ENCODE measurements at regions of chr2 and their contacts with region 1.

Region 1: DNA sequence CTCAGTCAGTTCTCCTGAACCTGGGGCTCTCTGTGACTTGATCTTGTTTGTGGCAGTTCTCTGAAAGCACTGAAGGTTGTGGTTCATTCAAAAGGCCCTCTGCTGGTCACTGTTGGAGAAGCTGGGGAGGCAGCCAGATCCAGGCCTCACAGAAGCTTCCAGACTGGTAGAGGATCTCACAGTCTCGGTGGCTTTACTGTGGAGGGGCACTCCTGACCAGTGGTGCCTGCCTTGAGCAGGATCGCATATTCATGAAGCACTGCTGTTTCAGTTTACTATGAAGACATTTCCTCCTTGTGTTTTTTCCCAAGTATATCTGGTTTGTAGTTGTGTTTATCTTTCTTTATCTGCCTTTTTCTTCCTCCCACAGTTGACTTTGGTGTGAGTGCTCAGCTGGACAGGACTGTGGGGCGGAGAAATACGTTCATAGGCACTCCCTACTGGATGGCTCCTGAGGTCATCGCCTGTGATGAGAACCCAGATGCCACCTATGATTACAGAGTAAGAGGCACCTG is 133.9 kb downstream of the MAP4K4 start:
- DNase-seq: peak; percentile 76
- H3K4me3 Mint-ChIP-seq: no peak overlapping the region
- H3K27ac Mint-ChIP-seq: peak overlapping the region; percentile 71
- H3K4me1 Mint-ChIP-seq: peaks cover 52% of the 10 kb centered on the region
- H3K27me3 Mint-ChIP-seq: no peaks in the 10 kb centered on the region

Region 2: DNA sequence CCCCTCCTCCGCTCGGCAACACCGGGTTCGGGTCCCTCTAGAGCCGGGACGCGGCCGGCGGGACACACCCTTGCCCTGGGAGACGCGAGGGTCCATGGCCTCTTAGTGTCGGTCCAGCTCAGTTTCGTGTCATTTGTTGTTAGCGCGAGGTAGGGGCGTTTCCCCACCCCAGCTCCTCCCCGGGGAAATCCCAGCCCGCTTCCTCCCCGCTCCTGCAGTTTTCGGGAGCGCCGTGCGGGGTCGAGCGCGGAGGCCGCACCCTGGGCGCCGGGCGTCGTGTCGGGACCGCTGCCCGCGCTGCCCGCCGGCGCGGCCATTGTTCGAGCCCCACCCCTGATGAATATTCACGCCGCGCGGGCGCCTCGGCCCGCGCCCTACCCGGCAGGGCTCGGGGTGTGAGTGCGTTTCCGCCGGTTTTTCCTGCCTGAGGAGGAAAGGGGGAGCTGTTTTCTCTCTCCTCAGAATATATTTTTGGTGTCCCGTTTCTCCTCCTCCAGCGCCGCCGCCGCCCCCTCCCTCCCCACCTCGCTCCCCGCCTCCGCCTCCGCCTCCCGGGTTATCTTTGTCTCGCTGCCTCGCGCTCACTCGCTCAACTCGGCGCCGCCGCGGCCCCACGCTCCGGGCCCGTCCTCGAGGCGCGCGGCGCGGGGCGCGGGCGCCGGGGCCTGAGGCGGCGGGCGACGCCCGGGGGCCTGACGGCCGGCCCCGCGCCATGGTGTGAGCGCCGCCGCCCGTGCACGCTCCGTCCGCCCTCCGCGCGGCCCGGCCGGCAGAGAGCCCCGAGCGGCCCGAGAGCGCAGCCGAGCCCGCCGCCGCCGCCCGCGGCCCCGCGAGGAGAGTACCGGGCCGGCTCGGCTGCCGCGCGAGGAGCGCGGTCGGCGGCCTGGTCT is 134.0 kb before region 1 on chr2 and contains the start of gene MAP4K4:
- CTCF ChIA-PET with region 1: interaction called, 17 read pairs
- POLR2A ChIA-PET with region 1: no interaction called
- intact Hi-C with region 1: loop called (anchors 2 kb)
- DNase-seq: peak; percentile 80
- H3K4me3 Mint-ChIP-seq: peak within 1 kb of the TSS; percentile 79
- H3K27ac Mint-ChIP-seq: peak within 1 kb of the TSS; percentile 78
- H3K4me1 Mint-ChIP-seq: peaks cover 26% of the 10 kb centered on the region
- H3K27me3 Mint-ChIP-seq: no peaks in the 10 kb centered on the region
- total RNA-seq, gene MAP4K4: 42.1 to 43.4 TPM

Region 3: GRCh38 chr2:101770726-101771125 is 60.7 kb before region 1 on chr2:
- CTCF ChIA-PET with region 1: interaction called, 13 read pairs
- POLR2A ChIA-PET with region 1: no interaction called
- intact Hi-C with region 1: loop called (anchors 2 kb)
- DNase-seq: peak; percentile 21
- H3K4me3 Mint-ChIP-seq: no peak overlapping the region
- H3K27ac Mint-ChIP-seq: no peak overlapping the region
- H3K4me1 Mint-ChIP-seq: peaks cover 82% of the 10 kb centered on the region
- H3K27me3 Mint-ChIP-seq: no peaks in the 10 kb centered on the region

Region 4: DNA sequence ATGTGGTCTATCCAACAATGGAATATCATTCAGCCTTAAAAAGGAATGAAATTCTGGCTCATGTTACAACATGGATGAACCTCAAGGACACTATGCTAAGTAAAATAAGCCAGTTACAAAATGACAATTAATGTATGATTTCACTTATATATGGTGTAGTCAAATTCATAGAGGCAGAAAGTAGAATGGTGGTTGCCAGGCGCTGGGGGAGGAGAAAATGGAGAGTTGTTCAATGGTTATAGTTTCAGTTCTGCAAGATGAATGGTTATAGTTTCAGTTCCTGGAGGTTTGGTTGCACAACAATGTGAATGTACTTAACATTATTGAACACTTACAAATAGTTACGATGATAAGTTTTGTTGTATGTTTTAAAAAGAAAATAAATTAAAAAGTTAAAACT is 81.1 kb after region 1 on chr2:
- CTCF ChIA-PET with region 1: no interaction called
- POLR2A ChIA-PET with region 1: no interaction called
- intact Hi-C with region 1: no loop called
- DNase-seq: peak; percentile 72
- H3K4me3 Mint-ChIP-seq: no peak overlapping the region
- H3K27ac Mint-ChIP-seq: no peak overlapping the region
- H3K4me1 Mint-ChIP-seq: peaks cover 11% of the 10 kb centered on the region
- H3K27me3 Mint-ChIP-seq: peaks cover 17% of the 10 kb centered on the region

Region 5: GRCh38 chr2:101949304-101949703 is 117.9 kb after region 1 on chr2:
- CTCF ChIA-PET with region 1: no interaction called
- POLR2A ChIA-PET with region 1: no interaction called
- intact Hi-C with region 1: no loop called
- DNase-seq: peak; percentile 30
- H3K4me3 Mint-ChIP-seq: no peak overlapping the region
- H3K27ac Mint-ChIP-seq: no peak overlapping the region
- H3K4me1 Mint-ChIP-seq: peaks cover 8% of the 10 kb centered on the region
- H3K27me3 Mint-ChIP-seq: peaks cover 3% of the 10 kb centered on the region

Region 6: GRCh38 chr2:102041351-102041750 is 209.9 kb after region 1 on chr2:
- CTCF ChIA-PET with region 1: no interaction called
- POLR2A ChIA-PET with region 1: no interaction called
- intact Hi-C with region 1: no loop called
- DNase-seq: no peak
- H3K4me3 Mint-ChIP-seq: no peak overlapping the region
- H3K27ac Mint-ChIP-seq: no peak overlapping the region
- H3K4me1 Mint-ChIP-seq: peaks cover 16% of the 10 kb centered on the region
- H3K27me3 Mint-ChIP-seq: peaks cover 33% of the 10 kb centered on the region

Region 7: GRCh38 chr2:102103992-102104871 is 272.8 kb after region 1 on chr2:
- CTCF ChIA-PET with region 1: no interaction called
- POLR2A ChIA-PET with region 1: no interaction called
- intact Hi-C with region 1: no loop called
- DNase-seq: peak; percentile 92
- H3K4me3 Mint-ChIP-seq: peak overlapping the region; percentile 81
- H3K27ac Mint-ChIP-seq: peak overlapping the region; percentile 86
- H3K4me1 Mint-ChIP-seq: peaks cover 50% of the 10 kb centered on the region
- H3K27me3 Mint-ChIP-seq: peaks cover 12% of the 10 kb centered on the region